B cell (primary cell): ENCODE measurements at regions of chr2 and their contacts with region 1.

Region 1: DNA sequence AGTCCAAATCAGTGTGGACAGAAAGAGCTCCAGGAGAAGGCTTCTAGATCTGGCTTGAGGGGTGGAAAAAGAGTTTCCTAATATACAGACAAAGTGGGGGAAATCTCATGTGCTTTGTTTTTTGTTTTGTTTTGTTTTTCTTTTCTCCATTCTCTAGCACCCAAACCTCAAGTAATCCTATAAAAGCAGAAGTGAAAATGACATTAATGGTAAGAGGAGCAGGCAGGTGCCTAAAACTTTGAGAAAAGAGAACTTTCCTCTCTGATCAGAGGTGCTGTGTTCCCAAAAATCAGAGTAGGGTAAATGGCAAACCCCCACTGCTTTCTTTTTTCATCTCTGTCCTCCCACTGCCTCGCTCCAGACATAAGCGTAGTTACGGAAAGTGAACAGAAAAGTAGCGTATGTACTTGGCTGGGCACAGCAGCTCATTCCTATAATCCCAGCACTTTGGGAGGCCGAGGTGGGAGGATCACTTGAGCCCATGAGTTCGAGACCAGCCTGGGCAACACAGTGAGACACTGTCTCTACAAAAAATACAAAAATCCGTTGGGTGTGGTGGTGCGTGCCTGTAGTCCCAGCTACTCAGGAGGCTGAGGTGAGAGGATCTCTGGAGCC is 77.8 kb downstream of the FAM161A start:
- DNase-seq: peak; percentile 71
- ATAC-seq: peak; percentile 81
- H3K4me3 ChIP-seq: peak overlapping the region in 2 of 5 experiments; percentile 21 to 43
- H3K4me3 Mint-ChIP-seq: peak overlapping the region; percentile 61
- H3K27ac ChIP-seq: peak overlapping the region; percentile 65 to 71
- H3K27ac Mint-ChIP-seq: peak overlapping the region; percentile 90
- H3K4me1 ChIP-seq: peaks cover 18 to 21% of the 10 kb centered on the region in 2 donors
- H3K4me1 Mint-ChIP-seq: peaks cover 21% of the 10 kb centered on the region
- H3K27me3 ChIP-seq: no peaks in the 10 kb centered on the region
- H3K27me3 Mint-ChIP-seq: peaks cover 13% of the 10 kb centered on the region
- CTCF ChIP-seq: no peak

Region 2: DNA sequence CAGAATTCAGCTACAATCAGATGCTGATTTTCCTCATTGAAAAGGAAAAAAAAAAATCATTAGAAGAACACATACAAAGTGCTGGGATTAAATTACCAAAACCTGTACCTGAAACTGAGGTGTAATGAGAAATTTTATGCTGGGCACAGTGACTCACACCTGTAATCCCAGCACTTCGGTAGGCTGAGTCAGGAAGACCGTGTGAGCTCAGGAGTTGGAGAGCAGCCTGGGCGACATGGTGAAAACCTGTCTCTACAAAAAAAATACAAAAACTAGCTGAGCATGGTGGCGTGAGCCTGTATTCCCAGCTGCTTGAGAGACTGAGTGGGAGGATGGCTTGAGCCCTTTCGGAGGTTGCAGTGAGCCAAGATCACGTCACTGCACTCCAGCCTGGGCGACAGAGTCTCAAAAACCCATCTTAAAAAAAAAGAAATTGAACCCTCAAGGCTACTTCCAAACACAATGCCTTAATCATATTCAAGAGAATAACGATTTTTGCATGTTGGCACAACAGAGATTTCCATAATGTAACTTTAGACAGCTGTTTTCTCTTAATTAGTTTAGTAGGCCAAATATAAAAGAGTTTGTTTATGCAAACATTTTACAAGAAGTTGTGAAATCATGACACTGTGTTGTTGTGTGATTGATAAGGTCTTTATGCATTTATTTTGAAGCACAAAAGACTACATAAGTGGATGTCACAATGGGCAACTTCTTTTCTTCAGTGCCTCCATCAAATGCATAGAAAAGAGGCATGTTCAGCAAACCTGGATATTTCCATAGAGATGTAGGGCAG is 13.9 kb after region 1 on chr2:
- CTCF ChIA-PET with region 1: interaction called, 6 read pairs
- POLR2A ChIA-PET with region 1: no interaction called
- intact Hi-C with region 1: loop called (anchors 1 kb)
- DNase-seq: no peak
- ATAC-seq: no peak
- H3K4me3 ChIP-seq: no peak overlapping the region
- H3K4me3 Mint-ChIP-seq: no peak overlapping the region
- H3K27ac ChIP-seq: no peak overlapping the region
- H3K27ac Mint-ChIP-seq: no peak overlapping the region
- H3K4me1 ChIP-seq: peaks cover 0 to 4% of the 10 kb centered on the region in 2 donors
- H3K4me1 Mint-ChIP-seq: peaks cover 4% of the 10 kb centered on the region
- H3K27me3 ChIP-seq: peaks cover 0 to 4% (median 0%) of the 10 kb centered on the region in 4 experiments
- H3K27me3 Mint-ChIP-seq: peaks cover 4% of the 10 kb centered on the region
- CTCF ChIP-seq: no peak